OCI-LY7 (cell line): ENCODE measurements at regions of chr10 and their contacts with region 1.

Region 1: DNA sequence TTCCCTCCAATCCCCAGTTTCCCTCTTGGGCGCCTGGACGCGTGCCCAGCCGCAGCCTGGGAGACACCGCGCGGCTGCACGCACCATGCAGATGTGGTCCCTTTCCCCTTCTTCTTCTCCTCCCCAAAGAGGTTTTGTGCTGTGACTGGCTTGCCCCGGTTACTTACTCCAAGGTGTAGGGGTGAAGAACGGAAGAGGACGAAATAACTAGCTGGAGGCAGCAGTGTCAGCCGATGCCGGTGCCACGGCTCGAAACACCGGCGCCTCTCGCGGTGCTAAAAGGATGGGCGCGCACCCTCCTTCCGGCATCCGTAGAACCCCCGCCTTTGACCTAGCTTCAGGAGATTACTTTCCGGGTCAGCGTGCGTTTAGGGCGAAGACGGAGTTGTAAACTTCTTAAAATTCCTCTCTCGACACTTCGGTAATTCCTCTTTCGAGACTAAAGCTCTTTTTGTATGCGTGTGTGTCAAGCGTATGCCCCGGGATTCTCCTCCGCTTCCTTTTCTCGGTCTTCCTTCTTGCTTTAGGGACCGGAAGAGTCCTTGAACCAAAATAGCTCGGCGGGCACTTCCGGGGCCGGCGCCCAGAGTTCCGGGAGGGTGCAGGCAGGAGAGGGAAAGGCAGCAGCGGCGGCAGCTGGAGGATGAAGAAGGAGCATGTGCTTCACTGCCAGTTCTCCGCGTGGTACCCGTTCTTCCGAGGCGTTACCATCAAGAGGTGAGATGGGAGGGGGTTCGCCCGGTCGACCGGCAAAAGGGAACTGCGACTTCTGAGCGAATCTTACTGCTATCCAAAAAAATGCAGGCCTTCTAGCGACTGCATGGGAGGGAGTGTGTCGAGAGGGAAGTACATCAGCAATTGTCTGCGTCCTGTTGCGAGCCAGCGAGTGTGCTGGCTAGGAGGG is at the starts of genes CDC123 and NUDT5:
- DNase-seq: peak; percentile 93
- H3K4me3 ChIP-seq: peak within 1 kb of the TSS; percentile 97
- H3K27ac ChIP-seq: peak within 1 kb of the TSS; percentile 88
- H3K4me1 ChIP-seq: peaks cover 38% of the 10 kb centered on the region
- CTCF ChIP-seq: no peak
- total RNA-seq, gene CDC123: 138 and 168 TPM in 2 replicates
- total RNA-seq, gene NUDT5: 55.7 and 70.2 TPM in 2 replicates

Region 2: GRCh38 chr10:12042797-12043651 is 152.8 kb before region 1 on chr10 and contains the start of gene UPF2:
- CTCF ChIA-PET with region 1: no interaction called
- POLR2A ChIA-PET with region 1: interaction called, 3 read pairs
- intact Hi-C with region 1: loop called (anchors 10 kb)
- DNase-seq: peak; percentile 99
- H3K4me3 ChIP-seq: peak within 1 kb of the TSS; percentile 99
- H3K27ac ChIP-seq: peak within 1 kb of the TSS; percentile 79
- H3K4me1 ChIP-seq: peaks cover 25% of the 10 kb centered on the region
- CTCF ChIP-seq: no peak
- total RNA-seq, gene UPF2: 24.8 and 28.0 TPM in 2 replicates

Region 3: GRCh38 chr10:12129222-12130111 is 66.4 kb before region 1 on chr10 and contains the start of gene SEC61A2:
- CTCF ChIA-PET with region 1: no interaction called
- POLR2A ChIA-PET with region 1: no interaction called
- intact Hi-C with region 1: loop called (anchors 1 kb)
- DNase-seq: peak; percentile 96
- H3K4me3 ChIP-seq: peak within 1 kb of the TSS; percentile 91
- H3K27ac ChIP-seq: peak within 1 kb of the TSS; percentile 36
- H3K4me1 ChIP-seq: peaks cover 6% of the 10 kb centered on the region
- CTCF ChIP-seq: no peak
- total RNA-seq, gene SEC61A2: 4.8 and 5.5 TPM in 2 replicates

Region 4: GRCh38 chr10:12140038-12140437 is 55.8 kb before region 1 on chr10:
- CTCF ChIA-PET with region 1: no interaction called
- POLR2A ChIA-PET with region 1: no interaction called
- intact Hi-C with region 1: no loop called
- DNase-seq: no peak
- H3K4me3 ChIP-seq: no peak overlapping the region
- H3K27ac ChIP-seq: no peak overlapping the region
- H3K4me1 ChIP-seq: no peaks in the 10 kb centered on the region
- CTCF ChIP-seq: no peak

Region 5: DNA sequence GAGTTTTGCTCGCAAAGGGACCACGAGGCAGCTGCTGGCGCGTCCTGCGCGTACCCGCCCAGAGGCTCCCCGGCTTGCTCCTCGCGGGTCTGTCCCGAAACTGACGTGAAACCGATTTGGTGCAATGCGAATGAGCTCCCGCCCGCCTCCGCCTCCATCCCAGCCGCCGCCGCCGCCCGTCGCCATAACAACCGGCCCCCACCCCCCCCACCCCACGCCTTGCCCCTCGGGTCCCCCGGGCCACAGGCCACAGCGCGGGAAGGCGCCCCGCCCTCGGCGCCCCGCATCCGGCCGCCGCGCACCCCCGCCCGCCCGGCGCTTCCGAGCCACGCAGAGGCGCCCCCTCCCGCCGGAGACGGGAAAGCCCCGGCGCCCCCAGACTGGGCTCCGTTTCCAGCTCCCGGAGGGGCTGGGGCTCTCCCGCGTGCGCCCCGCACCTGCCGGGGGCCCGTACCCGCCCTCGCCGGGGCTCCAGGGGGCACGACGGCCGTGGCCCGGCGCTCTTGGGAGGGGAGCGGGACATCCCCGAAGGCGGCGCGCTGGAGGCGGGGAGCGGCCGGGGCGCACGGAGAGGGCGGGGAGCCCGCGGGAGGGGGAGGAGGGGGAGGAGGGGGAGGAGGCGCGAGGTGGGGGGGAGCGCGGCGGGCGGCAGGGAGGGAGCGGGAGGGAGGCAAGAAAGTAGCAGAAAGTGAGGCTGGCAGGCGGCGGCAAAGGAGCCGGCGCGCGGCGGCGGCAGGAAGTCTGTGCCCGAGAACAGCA is 153.2 kb after region 1 on chr10 and contains the start of gene CAMK1D:
- CTCF ChIA-PET with region 1: no interaction called
- POLR2A ChIA-PET with region 1: no interaction called
- intact Hi-C with region 1: loop called (anchors 5 kb)
- DNase-seq: peak; percentile 90
- H3K4me3 ChIP-seq: peak within 1 kb of the TSS; percentile 84
- H3K27ac ChIP-seq: peak within 1 kb of the TSS; percentile 80
- H3K4me1 ChIP-seq: peaks cover 55% of the 10 kb centered on the region
- CTCF ChIP-seq: peak; percentile 52
- total RNA-seq, gene CAMK1D: 17.8 and 19.0 TPM in 2 replicates